PC-3 (cell line): ENCODE measurements at regions of chr13 and their contacts with region 1.

Region 1: GRCh38 chr13:71879129-71879535 is 12.1 kb upstream of the DACH1 start:
- DNase-seq: peak; percentile 30
- ATAC-seq: peak; percentile 60
- H3K4me3 ChIP-seq: no peak overlapping the region
- H3K27ac ChIP-seq: no peak overlapping the region
- H3K4me1 ChIP-seq: no peaks in the 10 kb centered on the region
- H3K27me3 ChIP-seq: no peaks in the 10 kb centered on the region
- CTCF ChIP-seq: peak; percentile 54

Region 2: DNA sequence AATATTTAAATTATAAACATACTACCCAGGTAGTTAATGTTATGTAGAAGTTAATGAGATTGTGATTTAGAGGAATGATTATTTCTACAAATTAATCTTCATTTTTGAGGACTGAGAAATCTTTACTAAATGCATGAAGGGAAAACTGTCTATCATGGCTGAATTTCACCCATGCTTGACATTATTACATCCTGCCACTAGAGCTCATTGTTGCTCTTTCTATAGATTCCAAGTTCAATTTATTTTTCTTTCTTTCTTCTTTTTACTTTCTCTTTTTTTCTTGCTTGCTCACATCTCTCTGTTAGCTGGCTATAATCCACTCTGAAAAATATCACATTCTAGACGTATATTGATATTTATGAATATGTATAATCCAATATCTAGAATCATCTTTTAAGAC is 1265.8 kb before region 1 on chr13:
- CTCF ChIA-PET with region 1: no interaction called
- POLR2A ChIA-PET with region 1: no interaction called
- intact Hi-C with region 1: loop called (anchors 10 kb)
- DNase-seq: peak; percentile 35
- ATAC-seq: no peak
- H3K4me3 ChIP-seq: no peak overlapping the region
- H3K27ac ChIP-seq: no peak overlapping the region
- H3K4me1 ChIP-seq: no peaks in the 10 kb centered on the region
- H3K27me3 ChIP-seq: no peaks in the 10 kb centered on the region; the same call in 1 of the 2 replicates
- CTCF ChIP-seq: peak; percentile 63

Region 3: GRCh38 chr13:71303144-71303543 is 576.0 kb before region 1 on chr13:
- CTCF ChIA-PET with region 1: no interaction called
- POLR2A ChIA-PET with region 1: no interaction called
- intact Hi-C with region 1: loop called (anchors 5 kb)
- DNase-seq: no peak
- ATAC-seq: peak; percentile 43; the same call in 1 of the 2 replicates
- H3K4me3 ChIP-seq: no peak overlapping the region
- H3K27ac ChIP-seq: no peak overlapping the region
- H3K4me1 ChIP-seq: no peaks in the 10 kb centered on the region
- H3K27me3 ChIP-seq: no peaks in the 10 kb centered on the region
- CTCF ChIP-seq: peak; percentile 24; the same call in 1 of the 2 replicates

Region 4: GRCh38 chr13:71320452-71320851 is 558.7 kb before region 1 on chr13:
- CTCF ChIA-PET with region 1: no interaction called
- POLR2A ChIA-PET with region 1: no interaction called
- intact Hi-C with region 1: loop called (anchors 5 kb)
- DNase-seq: peak; percentile 38
- ATAC-seq: no peak
- H3K4me3 ChIP-seq: no peak overlapping the region
- H3K27ac ChIP-seq: no peak overlapping the region
- H3K4me1 ChIP-seq: no peaks in the 10 kb centered on the region
- H3K27me3 ChIP-seq: 0 out of 2 replicates have a peak, but pooled peaks cover 2% of the 10 kb centered on the region
- CTCF ChIP-seq: peak; percentile 56

Region 5: GRCh38 chr13:71605744-71606143 is 273.4 kb before region 1 on chr13:
- CTCF ChIA-PET with region 1: no interaction called
- POLR2A ChIA-PET with region 1: no interaction called
- intact Hi-C with region 1: loop called (anchors 10 kb)
- DNase-seq: no peak
- ATAC-seq: peak; percentile 46; the same call in 1 of the 2 replicates
- H3K4me3 ChIP-seq: no peak overlapping the region
- H3K27ac ChIP-seq: no peak overlapping the region
- H3K4me1 ChIP-seq: no peaks in the 10 kb centered on the region
- H3K27me3 ChIP-seq: no peaks in the 10 kb centered on the region
- CTCF ChIP-seq: no peak